Cardiac septum (tissue), 1 donor: ENCODE measurements at regions of chr6 and their contacts with region 1.

Region 1: GRCh38 chr6:56902641-56903464 is 52.1 kb upstream of the BEND6 start:
- DNase-seq: no peak

Region 2: DNA sequence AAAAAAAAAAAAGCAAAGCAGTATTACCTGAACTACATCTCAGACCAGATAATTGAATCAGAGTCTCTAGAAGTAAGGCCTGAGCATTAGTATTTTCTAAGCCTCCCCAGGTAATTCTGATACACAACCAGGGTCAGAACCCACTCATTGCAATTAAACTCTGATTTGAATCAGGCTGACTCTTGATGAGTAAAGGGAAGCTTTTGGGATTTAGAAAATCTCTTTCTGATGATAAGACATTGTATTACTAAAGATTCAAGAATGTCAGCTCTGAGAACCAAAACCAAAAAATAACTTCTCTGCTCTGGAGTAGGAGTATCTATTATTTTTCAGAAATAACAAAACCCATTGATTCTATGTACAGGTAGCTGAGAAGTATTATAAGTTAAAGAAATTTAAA is 555.3 kb before region 1 on chr6:
- intact Hi-C with region 1: no loop called
- DNase-seq: no peak

Region 3: GRCh38 chr6:57021086-57021720 is 118.3 kb after region 1 on chr6:
- intact Hi-C with region 1: loop called (anchors 5 kb)
- DNase-seq: no peak

Region 4: GRCh38 chr6:57324538-57324937 is 421.7 kb after region 1 on chr6:
- intact Hi-C with region 1: loop called (anchors 5 kb)
- DNase-seq: no peak